Activated CD4-positive, alpha-beta T cell treated with anti-CD3 and anti-CD28 coated beads for 36 hours (primary cell): ENCODE measurements at regions of chr14 and their contacts with region 1.

Region 1: GRCh38 chr14:21269252-21270046 is at the start of gene HNRNPC:
- DNase-seq: peak; percentile 100
- ATAC-seq: peak; percentile 89
- H3K4me3 Mint-ChIP-seq: peak within 1 kb of the TSS; percentile 93
- H3K27ac Mint-ChIP-seq: peak within 1 kb of the TSS; percentile 100
- H3K4me1 Mint-ChIP-seq: peaks cover 25% of the 10 kb centered on the region
- H3K27me3 Mint-ChIP-seq: no peaks in the 10 kb centered on the region
- total RNA-seq, gene HNRNPC: 1,155 to 1,665 TPM

Region 2: GRCh38 chr14:20556500-20557211 is 712.8 kb before region 1 on chr14:
- CTCF ChIA-PET with region 1: no interaction called
- POLR2A ChIA-PET with region 1: no interaction called
- intact Hi-C with region 1: no loop called
- DNase-seq: no peak
- ATAC-seq: no peak
- H3K4me3 Mint-ChIP-seq: no peak overlapping the region
- H3K27ac Mint-ChIP-seq: no peak overlapping the region
- H3K4me1 Mint-ChIP-seq: no peaks in the 10 kb centered on the region
- H3K27me3 Mint-ChIP-seq: no peaks in the 10 kb centered on the region

Region 3: DNA sequence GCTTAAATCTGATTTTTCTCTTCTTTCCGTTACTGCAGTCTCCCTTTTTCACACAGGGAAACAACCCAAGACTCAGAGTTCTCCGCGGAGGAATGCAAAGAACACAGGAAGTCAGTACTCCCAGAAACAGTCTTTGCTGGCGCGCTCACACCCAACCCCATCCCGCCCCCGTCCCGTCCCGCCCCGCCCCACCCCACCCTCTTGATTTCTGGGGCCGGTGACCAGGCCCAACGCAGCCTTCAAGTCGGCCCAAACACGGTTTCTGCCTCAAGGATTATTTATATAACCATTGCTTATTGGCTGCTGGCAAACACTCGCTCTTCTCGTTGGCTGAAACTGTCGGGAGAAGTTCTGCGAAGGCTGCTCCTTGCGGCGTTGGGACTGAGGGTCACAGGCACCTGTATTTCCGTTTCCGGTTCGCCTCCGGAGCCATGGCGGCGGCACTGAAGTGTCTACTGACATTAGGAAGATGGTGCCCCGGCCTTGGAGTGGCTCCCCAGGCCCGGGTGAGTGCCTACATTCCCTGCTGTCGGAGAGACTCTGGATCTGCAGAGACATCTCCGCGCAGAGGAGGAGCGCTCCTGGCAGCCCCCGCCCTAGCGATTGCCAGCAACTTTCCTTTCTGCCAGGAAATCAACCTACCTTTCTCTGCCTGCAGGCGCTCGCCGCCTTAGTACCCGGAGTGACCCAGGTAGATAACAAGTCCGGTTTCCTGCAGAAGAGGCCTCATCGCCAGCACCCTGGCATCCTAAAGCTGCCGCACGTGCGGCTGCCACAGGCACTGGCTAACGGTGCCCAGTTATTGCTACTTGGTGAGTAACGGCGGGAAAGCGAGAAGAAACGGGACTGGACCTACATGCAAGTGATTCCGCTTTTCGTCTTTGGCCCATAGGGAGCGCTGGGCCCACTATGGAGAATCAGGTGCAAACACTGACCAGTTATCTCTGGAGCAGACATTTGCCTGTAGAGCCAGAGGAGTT is 279.6 kb before region 1 on chr14 and contains the start of gene METTL17:
- CTCF ChIA-PET with region 1: no interaction called
- POLR2A ChIA-PET with region 1: no interaction called
- intact Hi-C with region 1: loop called in 1 of 2 experiments (anchors 1 kb)
- DNase-seq: peak; percentile 93
- ATAC-seq: peak; percentile 97
- H3K4me3 Mint-ChIP-seq: peak within 1 kb of the TSS; percentile 92
- H3K27ac Mint-ChIP-seq: peak within 1 kb of the TSS; percentile 89
- H3K4me1 Mint-ChIP-seq: peaks cover 37% of the 10 kb centered on the region
- H3K27me3 Mint-ChIP-seq: no peaks in the 10 kb centered on the region
- total RNA-seq, gene METTL17: 89.3 to 90.0 TPM

Region 4: GRCh38 chr14:21308479-21309237 is 39.2 kb after region 1 on chr14:
- CTCF ChIA-PET with region 1: interaction called, 4 read pairs
- POLR2A ChIA-PET with region 1: interaction called, 4 read pairs
- intact Hi-C with region 1: loop called (anchors 1 kb)
- DNase-seq: peak; percentile 88
- ATAC-seq: peak; percentile 93
- H3K4me3 Mint-ChIP-seq: peak overlapping the region; percentile 73
- H3K27ac Mint-ChIP-seq: peak overlapping the region; percentile 92
- H3K4me1 Mint-ChIP-seq: peaks cover 22% of the 10 kb centered on the region
- H3K27me3 Mint-ChIP-seq: no peaks in the 10 kb centered on the region

Region 5: GRCh38 chr14:21476925-21477681 is 207.7 kb after region 1 on chr14 and contains the starts of genes RAB2B and TOX4:
- CTCF ChIA-PET with region 1: no interaction called
- POLR2A ChIA-PET with region 1: interaction called, 4 read pairs
- intact Hi-C with region 1: loop called (anchors 1 kb)
- DNase-seq: peak; percentile 96
- ATAC-seq: peak; percentile 98
- H3K4me3 Mint-ChIP-seq: peak within 1 kb of the TSS; percentile 99
- H3K27ac Mint-ChIP-seq: peak within 1 kb of the TSS; percentile 100
- H3K4me1 Mint-ChIP-seq: peaks cover 22% of the 10 kb centered on the region
- H3K27me3 Mint-ChIP-seq: no peaks in the 10 kb centered on the region
- total RNA-seq, gene RAB2B: 21.2 to 22.0 TPM
- total RNA-seq, gene TOX4: 79.5 to 85.6 TPM

Region 6: DNA sequence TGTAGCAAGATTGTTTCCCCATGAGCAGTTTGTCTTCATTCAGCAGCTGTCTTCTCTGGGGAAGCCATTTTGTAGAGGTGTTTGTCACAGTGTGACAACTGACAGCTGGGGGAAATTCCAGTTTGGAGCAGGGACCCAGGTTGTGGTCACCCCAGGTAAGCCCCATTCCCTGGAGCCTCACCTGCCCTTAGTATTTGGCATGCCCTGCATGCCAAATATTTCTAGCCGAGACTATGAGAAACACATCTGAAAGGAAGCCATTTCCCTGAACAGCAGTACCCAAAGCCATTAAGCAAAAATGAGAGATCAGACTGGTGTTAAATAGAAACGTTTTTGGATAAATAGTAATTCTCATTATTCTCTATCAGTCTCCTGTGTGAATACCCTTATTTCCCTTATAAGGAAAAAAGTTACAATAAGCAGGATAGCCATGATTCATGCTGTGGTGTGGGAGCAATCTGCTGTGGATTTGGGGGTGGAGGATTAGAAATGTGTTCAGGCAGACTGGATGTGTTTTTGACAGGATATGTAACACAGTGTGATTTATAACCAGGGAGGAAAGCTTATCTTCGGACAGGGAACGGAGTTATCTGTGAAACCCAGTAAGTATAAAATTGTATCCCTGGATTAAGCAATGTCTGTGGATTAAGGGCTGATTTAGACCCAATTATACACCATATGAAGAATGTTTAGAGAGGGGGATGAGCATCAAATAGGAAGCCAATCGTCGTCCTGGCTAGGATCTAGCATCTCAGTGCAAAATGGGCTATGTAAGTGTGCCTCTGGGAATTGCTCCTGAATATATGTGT is 1250.6 kb after region 1 on chr14:
- CTCF ChIA-PET with region 1: no interaction called
- POLR2A ChIA-PET with region 1: no interaction called
- intact Hi-C with region 1: loop called in 1 of 2 experiments (anchors 10 kb)
- DNase-seq: no peak
- ATAC-seq: peak; percentile 14
- H3K4me3 Mint-ChIP-seq: peak overlapping the region; percentile 84
- H3K27ac Mint-ChIP-seq: peak overlapping the region; percentile 97
- H3K4me1 Mint-ChIP-seq: peaks cover 87% of the 10 kb centered on the region
- H3K27me3 Mint-ChIP-seq: no peaks in the 10 kb centered on the region